ENCODE measurements at regions of chr5 and their contacts with region 1.

Region 1: GRCh38 chr5:107875833-107876232 is 205.1 kb upstream of the EFNA5 start:
- DNase-seq: no peak
- ATAC-seq: no peak
- H3K4me3 ChIP-seq: no peak overlapping the region
- H3K27ac ChIP-seq: no peak overlapping the region
- H3K4me1 ChIP-seq: no peaks in the 10 kb centered on the region
- H3K27me3 ChIP-seq: no peaks in the 10 kb centered on the region

Region 2: DNA sequence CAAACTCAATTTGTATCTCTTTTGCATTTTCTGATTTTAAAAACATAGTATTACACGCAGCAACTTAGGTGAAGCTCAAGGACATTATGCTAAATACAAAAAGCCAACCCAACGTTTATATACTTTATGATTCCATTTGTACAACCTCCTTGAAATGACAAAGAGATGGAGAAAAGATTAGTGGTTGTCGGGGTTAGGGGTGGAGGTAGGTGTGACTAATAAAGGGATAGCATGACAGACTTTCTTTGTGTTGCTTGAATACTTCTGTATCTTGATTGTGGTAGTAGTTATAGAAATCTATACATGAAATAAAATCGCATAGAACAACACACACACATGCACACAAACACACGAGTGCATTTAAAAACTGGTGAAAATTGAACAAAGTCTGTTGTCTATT is 162.6 kb before region 1 on chr5:
- intact Hi-C with region 1: no loop called
- DNase-seq: no peak
- ATAC-seq: no peak
- H3K4me3 ChIP-seq: no peak overlapping the region
- H3K27ac ChIP-seq: no peak overlapping the region
- H3K4me1 ChIP-seq: no peaks in the 10 kb centered on the region
- H3K27me3 ChIP-seq: no peaks in the 10 kb centered on the region

Region 3: DNA sequence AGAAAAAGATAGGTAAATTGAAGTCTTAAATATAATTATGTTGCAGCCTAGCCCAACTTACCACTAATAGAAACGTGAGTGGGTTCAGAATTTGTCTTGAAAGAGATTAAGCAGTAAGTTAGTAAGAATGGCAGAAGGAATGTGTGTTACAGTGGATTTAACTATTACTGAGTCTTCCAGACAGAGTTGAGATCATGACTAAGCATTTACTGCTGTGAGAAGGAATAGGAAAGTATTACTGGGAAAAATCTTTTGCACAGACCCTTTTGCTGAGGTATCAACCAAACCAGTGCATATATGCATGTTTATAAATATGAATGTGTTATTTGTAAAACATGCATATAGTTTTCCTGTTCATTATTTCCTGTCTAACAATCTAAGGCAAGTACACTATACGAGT is 92.3 kb before region 1 on chr5:
- intact Hi-C with region 1: no loop called
- DNase-seq: no peak
- ATAC-seq: no peak
- H3K4me3 ChIP-seq: no peak overlapping the region
- H3K27ac ChIP-seq: no peak overlapping the region
- H3K4me1 ChIP-seq: no peaks in the 10 kb centered on the region
- H3K27me3 ChIP-seq: no peaks in the 10 kb centered on the region

Region 4: DNA sequence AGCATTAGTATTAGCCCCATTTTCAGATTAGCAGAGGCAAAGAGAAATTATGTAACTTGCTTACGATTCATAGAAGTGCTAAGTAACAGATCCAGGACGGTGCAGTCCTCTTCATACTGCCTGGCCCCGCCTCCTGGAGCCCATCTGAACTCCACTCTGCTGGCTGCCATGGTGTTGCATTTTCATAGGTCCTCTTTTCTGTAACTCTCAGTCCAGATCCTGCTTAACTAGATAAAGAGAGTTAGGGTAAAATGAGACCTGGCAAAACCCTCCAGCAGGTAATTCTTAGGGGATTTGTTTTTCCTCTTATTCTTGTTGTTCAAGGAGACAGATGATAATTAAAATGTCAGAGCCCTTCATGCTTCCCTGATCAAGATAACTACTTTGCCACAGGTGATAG is 70.0 kb before region 1 on chr5:
- intact Hi-C with region 1: loop called in 1 of 4 experiments (anchors 2 kb)
- DNase-seq: no peak
- ATAC-seq: no peak
- H3K4me3 ChIP-seq: no peak overlapping the region
- H3K27ac ChIP-seq: no peak overlapping the region
- H3K4me1 ChIP-seq: no peaks in the 10 kb centered on the region
- H3K27me3 ChIP-seq: no peaks in the 10 kb centered on the region

Region 5: DNA sequence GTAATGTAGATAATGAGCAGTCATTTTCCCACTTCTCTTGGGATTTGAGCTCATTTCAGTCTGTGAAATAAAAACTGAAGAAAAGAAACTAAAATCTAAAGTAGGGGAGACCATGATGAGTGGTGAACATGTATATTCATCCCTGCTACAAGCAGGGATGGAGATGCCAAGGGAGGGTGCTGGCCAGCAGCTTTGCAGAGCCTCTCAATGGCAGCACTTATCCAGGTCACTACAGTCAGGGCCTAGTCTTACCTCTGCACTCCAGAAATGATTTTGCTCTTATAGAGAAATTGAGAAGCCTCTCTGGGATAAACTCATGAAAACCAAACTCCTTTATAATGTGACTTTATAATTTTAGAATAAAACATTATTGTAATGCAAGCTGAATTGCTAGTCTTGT is 188.5 kb after region 1 on chr5:
- intact Hi-C with region 1: no loop called
- DNase-seq: no peak
- ATAC-seq: no peak
- H3K4me3 ChIP-seq: no peak overlapping the region
- H3K27ac ChIP-seq: no peak overlapping the region
- H3K4me1 ChIP-seq: no peaks in the 10 kb centered on the region
- H3K27me3 ChIP-seq: no peaks in the 10 kb centered on the region

Region 6: DNA sequence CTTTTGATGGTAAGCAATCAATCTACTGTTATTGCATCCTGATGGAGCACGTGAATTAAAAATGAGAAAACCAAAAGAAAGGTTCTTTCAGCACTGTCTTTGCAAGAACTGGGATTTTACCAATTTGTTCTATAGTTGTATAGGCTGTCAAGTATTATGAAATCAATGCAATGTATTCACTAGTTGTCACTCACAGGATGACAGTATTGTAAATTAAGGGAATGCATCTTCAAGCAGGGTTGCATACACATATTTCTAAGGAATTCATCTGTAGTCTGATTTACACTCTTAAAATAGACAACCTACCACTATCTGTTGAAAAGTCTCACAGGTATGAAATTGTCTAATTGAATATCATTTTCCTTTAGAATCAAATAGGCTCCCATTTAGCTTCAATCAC is 253.3 kb after region 1 on chr5:
- intact Hi-C with region 1: no loop called
- DNase-seq: no peak
- ATAC-seq: no peak
- H3K4me3 ChIP-seq: no peak overlapping the region
- H3K27ac ChIP-seq: no peak overlapping the region
- H3K4me1 ChIP-seq: no peaks in the 10 kb centered on the region
- H3K27me3 ChIP-seq: no peaks in the 10 kb centered on the region

Measured in right cardiac atrium (tissue), 5 donors.